Caco-2 (cell line): ENCODE measurements at regions of chr1 and their contacts with region 1.

Region 1: DNA sequence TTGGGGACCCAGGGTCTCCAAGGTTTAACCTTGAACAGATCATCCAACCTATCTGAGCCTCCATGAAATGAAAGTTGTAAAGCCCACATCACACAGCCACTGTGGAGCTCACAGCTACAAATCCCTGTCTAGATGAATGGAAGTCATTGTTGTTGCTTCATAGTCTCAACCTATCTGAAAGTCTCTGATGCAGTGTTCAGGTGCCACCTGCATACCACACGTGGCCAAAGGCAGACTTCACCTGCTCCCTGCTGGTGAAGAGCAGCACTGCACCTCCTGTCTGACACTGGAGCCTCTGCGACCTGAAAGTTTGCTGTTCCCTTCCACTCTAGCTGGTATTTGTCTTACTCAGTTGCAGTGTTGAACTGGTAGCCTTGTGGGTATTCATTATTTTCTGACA is 18.3 kb downstream of the LORICRIN start:
- DNase-seq: peak; percentile 66 to 71
- H3K4me3 ChIP-seq: no peak overlapping the region
- H3K4me3 Mint-ChIP-seq: no peak overlapping the region
- H3K27ac Mint-ChIP-seq: no peak overlapping the region
- H3K4me1 ChIP-seq: no peaks in the 10 kb centered on the region
- H3K4me1 Mint-ChIP-seq: no peaks in the 10 kb centered on the region
- H3K27me3 ChIP-seq: no peaks in the 10 kb centered on the region
- H3K27me3 Mint-ChIP-seq: peaks cover 14% of the 10 kb centered on the region
- CTCF ChIP-seq: peak; percentile 78

Region 2: DNA sequence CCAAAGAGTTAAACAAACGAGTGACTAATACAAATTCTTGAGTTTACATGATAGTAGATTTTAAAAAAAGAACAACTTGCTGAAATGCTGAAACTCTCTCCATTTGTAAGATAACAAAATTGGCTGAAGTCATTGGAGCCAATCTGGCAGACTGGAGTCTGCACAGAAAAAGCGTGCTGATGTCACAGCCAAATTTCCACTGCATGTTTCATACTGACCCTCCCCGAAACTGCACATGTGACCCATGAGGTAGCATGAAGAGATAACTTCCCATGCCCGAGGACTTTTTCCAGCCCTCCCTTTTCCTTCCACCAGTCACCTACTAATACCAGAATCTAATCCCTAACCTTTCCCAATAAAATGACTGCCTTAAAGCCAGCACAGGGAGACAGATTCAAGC is 75.8 kb before region 1 on chr1:
- CTCF ChIA-PET with region 1: no interaction called
- POLR2A ChIA-PET with region 1: no interaction called
- intact Hi-C with region 1: no loop called
- DNase-seq: no peak
- H3K4me3 ChIP-seq: no peak overlapping the region
- H3K4me3 Mint-ChIP-seq: no peak overlapping the region
- H3K27ac Mint-ChIP-seq: no peak overlapping the region
- H3K4me1 ChIP-seq: no peaks in the 10 kb centered on the region
- H3K4me1 Mint-ChIP-seq: no peaks in the 10 kb centered on the region
- H3K27me3 ChIP-seq: no peaks in the 10 kb centered on the region
- H3K27me3 Mint-ChIP-seq: peaks cover 29% of the 10 kb centered on the region
- CTCF ChIP-seq: no peak

Region 3: GRCh38 chr1:153238536-153238935 is 39.3 kb before region 1 on chr1:
- CTCF ChIA-PET with region 1: no interaction called
- POLR2A ChIA-PET with region 1: no interaction called
- intact Hi-C with region 1: loop called (anchors 2 kb)
- DNase-seq: peak in 1 of 2 experiments; percentile 21
- H3K4me3 ChIP-seq: no peak overlapping the region
- H3K4me3 Mint-ChIP-seq: no peak overlapping the region
- H3K27ac Mint-ChIP-seq: no peak overlapping the region
- H3K4me1 ChIP-seq: no peaks in the 10 kb centered on the region
- H3K4me1 Mint-ChIP-seq: no peaks in the 10 kb centered on the region
- H3K27me3 ChIP-seq: no peaks in the 10 kb centered on the region; the same call in 1 of the 2 replicates
- H3K27me3 Mint-ChIP-seq: peaks cover 11% of the 10 kb centered on the region
- CTCF ChIP-seq: peak in 1 of 2 experiments; percentile 44